ENCODE measurements at regions of chr15 and their contacts with region 1.

Region 1: GRCh38 chr15:94670438-94671034 is 439.2 kb downstream of the MCTP2 start:
- DNase-seq: no peak
- ATAC-seq: peak; percentile 60
- H3K4me3 ChIP-seq: no peak overlapping the region
- H3K27ac ChIP-seq: no peak overlapping the region
- H3K4me1 ChIP-seq: no peaks in the 10 kb centered on the region
- H3K27me3 ChIP-seq: no peaks in the 10 kb centered on the region; a peak in 1 of 4 replicates
- CTCF ChIP-seq: peak; percentile 45 to 66 (median 53); a peak in 5 of 6 replicates
- EP300 ChIP-seq: no peak
- POLR2A ChIP-seq: no peak
- RAD21 ChIP-seq: peak; percentile 79

Region 2: GRCh38 chr15:94582369-94582768 is 88.2 kb before region 1 on chr15:
- CTCF ChIA-PET with region 1: interaction called, 10 read pairs
- POLR2A ChIA-PET with region 1: no interaction called
- RAD21 ChIA-PET with region 1: interaction called, 3 read pairs
- SMC1A ChIA-PET with region 1: interaction called, 4 read pairs
- in situ Hi-C with region 1: no loop called
- intact Hi-C with region 1: no loop called
- DNase-seq: peak; percentile 9
- ATAC-seq: peak; percentile 71
- H3K4me3 ChIP-seq: no peak overlapping the region
- H3K27ac ChIP-seq: no peak overlapping the region
- H3K4me1 ChIP-seq: peaks cover 17% of the 10 kb centered on the region; the same call in 1 of the 2 replicates
- H3K27me3 ChIP-seq: no peaks in the 10 kb centered on the region; a peak in 2 of 4 replicates
- CTCF ChIP-seq: peak; percentile 43 to 65 (median 48); a peak in 4 of 6 replicates
- EP300 ChIP-seq: no peak
- POLR2A ChIP-seq: no peak
- RAD21 ChIP-seq: peak; percentile 54

Region 3: DNA sequence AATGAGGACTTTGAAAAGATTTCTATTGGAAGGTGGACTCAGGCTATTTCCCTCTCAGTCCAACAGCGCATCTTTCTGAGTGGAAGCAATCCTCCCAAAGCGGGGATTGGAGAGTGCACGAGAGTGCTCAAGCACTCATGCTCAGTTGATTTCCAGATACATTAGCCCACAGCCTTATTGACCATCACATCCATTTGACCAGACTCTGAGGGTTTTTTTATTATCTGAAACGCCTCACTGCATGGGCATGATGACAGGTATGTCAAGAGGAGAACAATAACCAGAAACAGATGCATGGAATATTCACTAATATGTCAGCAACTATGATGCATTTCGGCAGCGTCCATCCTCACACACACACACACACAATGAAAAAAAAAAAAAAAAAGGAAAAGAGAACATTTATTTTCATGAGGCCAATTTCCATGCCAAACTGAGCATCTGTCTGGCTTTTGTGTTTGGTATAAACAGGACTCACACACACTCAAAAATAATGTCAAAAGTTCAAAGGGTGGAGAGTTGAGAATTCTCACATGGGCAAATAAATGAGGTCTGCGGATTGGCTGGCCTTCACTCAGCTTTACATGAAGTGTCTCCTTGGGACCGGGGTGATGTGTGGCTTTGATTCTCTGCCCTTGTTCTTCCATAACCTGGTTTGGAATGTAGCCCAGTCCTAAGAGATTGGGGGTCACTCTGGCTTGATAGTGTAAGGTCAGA is 67.6 kb before region 1 on chr15:
- CTCF ChIA-PET with region 1: no interaction called
- POLR2A ChIA-PET with region 1: no interaction called
- RAD21 ChIA-PET with region 1: no interaction called
- SMC1A ChIA-PET with region 1: no interaction called
- in situ Hi-C with region 1: no loop called
- intact Hi-C with region 1: loop called (anchors 2 kb)
- DNase-seq: no peak
- ATAC-seq: no peak
- H3K4me3 ChIP-seq: no peak overlapping the region
- H3K27ac ChIP-seq: no peak overlapping the region
- H3K4me1 ChIP-seq: no peaks in the 10 kb centered on the region
- H3K27me3 ChIP-seq: peaks cover 0 to 2% of the 10 kb centered on the region in 2 experiments; a peak in 1 of 4 replicates
- CTCF ChIP-seq: no peak
- EP300 ChIP-seq: no peak
- POLR2A ChIP-seq: no peak
- RAD21 ChIP-seq: no peak

Region 4: DNA sequence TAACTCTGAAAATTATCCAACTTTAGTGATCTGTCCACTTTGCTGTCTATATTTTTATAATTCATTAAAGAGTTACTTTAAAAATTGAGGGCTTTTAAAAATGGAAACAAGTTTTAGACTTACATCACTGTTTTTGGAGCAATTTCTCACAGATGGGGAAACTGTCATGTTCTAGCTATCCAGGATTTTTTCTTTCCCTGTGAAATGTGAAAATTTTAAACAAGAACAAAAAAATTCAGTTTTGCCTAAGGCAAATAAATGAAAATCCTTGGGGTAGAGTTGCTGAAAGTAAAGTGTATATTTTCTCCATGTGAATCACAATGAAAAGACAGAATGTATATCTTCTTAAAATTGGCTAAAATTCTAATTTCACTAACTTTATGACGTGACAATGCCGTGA is 114.6 kb after region 1 on chr15:
- CTCF ChIA-PET with region 1: no interaction called
- POLR2A ChIA-PET with region 1: no interaction called
- RAD21 ChIA-PET with region 1: no interaction called
- SMC1A ChIA-PET with region 1: no interaction called
- in situ Hi-C with region 1: no loop called
- intact Hi-C with region 1: no loop called
- DNase-seq: no peak
- ATAC-seq: no peak
- H3K4me3 ChIP-seq: no peak overlapping the region
- H3K27ac ChIP-seq: no peak overlapping the region
- H3K4me1 ChIP-seq: no peaks in the 10 kb centered on the region
- H3K27me3 ChIP-seq: no peaks in the 10 kb centered on the region
- CTCF ChIP-seq: no peak
- EP300 ChIP-seq: no peak
- POLR2A ChIP-seq: no peak
- RAD21 ChIP-seq: no peak

Region 5: GRCh38 chr15:95025924-95026728 is 355.6 kb after region 1 on chr15:
- CTCF ChIA-PET with region 1: interaction called, 11 read pairs
- POLR2A ChIA-PET with region 1: no interaction called
- RAD21 ChIA-PET with region 1: no interaction called
- SMC1A ChIA-PET with region 1: no interaction called
- in situ Hi-C with region 1: no loop called
- intact Hi-C with region 1: loop called (anchors 5 kb)
- DNase-seq: no peak
- ATAC-seq: peak; percentile 95
- H3K4me3 ChIP-seq: no peak overlapping the region
- H3K27ac ChIP-seq: no peak overlapping the region
- H3K4me1 ChIP-seq: no peaks in the 10 kb centered on the region
- H3K27me3 ChIP-seq: no peaks in the 10 kb centered on the region
- CTCF ChIP-seq: peak; percentile 22 to 61 (median 38); a peak in 5 of 6 replicates
- EP300 ChIP-seq: no peak
- POLR2A ChIP-seq: no peak
- RAD21 ChIP-seq: peak; percentile 40; the same call in 1 of the 2 replicates

Measured in GM12878 (cell line).